Activated CD8-positive, alpha-beta T cell treated with anti-CD3 and anti-CD28 coated beads, Interleukin-2, amount 10 ng/mL, durations not matched to agents 7 days and 5 days (primary cell): ENCODE measurements at regions of chr9 and their contacts with region 1.

Region 1: DNA sequence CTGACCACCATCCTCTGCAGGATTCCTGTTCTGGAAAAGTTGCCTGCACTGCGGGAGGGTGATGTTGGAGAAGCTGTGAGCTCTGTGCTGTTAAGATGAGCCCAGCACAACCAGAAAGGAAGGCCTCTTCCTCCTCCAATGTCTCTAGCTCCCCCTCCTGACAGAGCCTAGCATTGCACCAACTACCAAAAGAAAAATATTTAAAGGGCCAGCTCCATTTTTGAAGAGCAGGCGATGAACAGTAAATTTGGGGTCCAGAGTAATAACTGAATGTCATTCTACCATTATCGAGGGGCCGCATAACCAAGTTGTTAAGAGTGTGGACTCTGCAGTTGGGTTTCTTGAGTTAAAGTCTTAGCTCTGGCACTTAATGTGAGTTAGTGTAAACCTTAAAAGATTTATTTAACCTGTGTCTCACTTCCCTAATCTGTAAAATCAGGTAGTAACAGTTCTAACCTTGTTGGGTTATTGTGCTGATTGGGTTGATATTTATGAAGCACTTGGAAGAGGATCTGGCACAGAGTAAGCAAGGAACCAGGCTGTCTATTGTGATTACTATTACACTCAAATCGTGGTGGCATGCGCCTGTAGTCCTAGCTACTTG is 3.9 kb downstream of the TEX53 start:
- DNase-seq: peak; percentile 92
- ATAC-seq: peak; percentile 84
- H3K4me3 Mint-ChIP-seq: no peak overlapping the region
- H3K27ac Mint-ChIP-seq: peak overlapping the region; percentile 70
- H3K4me1 Mint-ChIP-seq: peaks cover 19% of the 10 kb centered on the region
- H3K27me3 Mint-ChIP-seq: no peaks in the 10 kb centered on the region

Region 2: GRCh38 chr9:114349713-114350480 is 303.8 kb before region 1 on chr9:
- CTCF ChIA-PET with region 1: no interaction called
- POLR2A ChIA-PET with region 1: no interaction called
- DNase-seq: no peak
- ATAC-seq: no peak
- H3K4me3 Mint-ChIP-seq: no peak overlapping the region
- H3K27ac Mint-ChIP-seq: peak overlapping the region; percentile 92
- H3K4me1 Mint-ChIP-seq: peaks cover 65% of the 10 kb centered on the region
- H3K27me3 Mint-ChIP-seq: no peaks in the 10 kb centered on the region

Region 3: DNA sequence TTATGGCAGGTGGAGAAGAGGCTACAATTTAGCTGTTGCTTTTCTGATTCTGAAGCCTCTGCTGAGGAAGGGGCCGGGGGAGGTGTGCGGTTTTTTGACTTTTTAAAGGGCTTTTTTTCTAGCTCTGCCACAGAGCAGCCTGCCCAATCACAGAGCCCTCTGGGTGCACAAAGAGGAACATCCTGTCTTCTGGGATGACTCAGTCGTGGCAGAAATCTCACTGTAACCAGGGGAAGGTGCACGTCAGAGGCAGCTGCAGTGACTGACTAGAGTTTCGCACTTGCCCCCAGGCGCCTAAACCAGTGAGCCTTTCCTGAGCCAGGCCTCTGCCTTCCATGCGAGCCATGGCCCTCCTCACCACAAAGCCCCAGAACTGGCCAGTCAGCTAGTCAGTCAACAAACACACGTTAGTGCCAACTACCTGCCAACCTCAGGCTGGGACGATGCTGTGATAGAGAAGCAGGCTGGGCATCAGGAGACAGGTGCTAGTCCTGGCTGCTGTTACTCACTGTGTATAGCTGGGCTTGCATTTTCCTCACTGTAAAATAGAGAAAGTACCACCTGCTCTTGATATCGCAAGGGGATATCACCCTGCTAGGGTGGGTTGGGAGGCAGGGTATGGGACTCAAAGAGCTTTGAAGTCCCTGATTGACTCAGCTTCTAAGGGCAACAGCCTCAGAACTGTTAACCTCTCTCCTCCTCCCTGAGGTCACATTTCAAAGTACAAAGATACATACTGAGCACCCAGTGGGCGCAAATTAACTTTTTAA is 268.1 kb before region 1 on chr9:
- CTCF ChIA-PET with region 1: interaction called, 18 read pairs
- POLR2A ChIA-PET with region 1: no interaction called
- DNase-seq: peak; percentile 95
- ATAC-seq: peak; percentile 81
- H3K4me3 Mint-ChIP-seq: peak overlapping the region; percentile 99
- H3K27ac Mint-ChIP-seq: peak overlapping the region; percentile 95
- H3K4me1 Mint-ChIP-seq: peaks cover 50% of the 10 kb centered on the region
- H3K27me3 Mint-ChIP-seq: no peaks in the 10 kb centered on the region

Region 4: GRCh38 chr9:114434878-114435311 is 218.8 kb before region 1 on chr9:
- CTCF ChIA-PET with region 1: interaction called, 57 read pairs
- POLR2A ChIA-PET with region 1: no interaction called
- DNase-seq: no peak
- ATAC-seq: peak; percentile 30
- H3K4me3 Mint-ChIP-seq: no peak overlapping the region
- H3K27ac Mint-ChIP-seq: no peak overlapping the region
- H3K4me1 Mint-ChIP-seq: peaks cover 6% of the 10 kb centered on the region
- H3K27me3 Mint-ChIP-seq: peaks cover under 1% of the 10 kb centered on the region

Region 5: DNA sequence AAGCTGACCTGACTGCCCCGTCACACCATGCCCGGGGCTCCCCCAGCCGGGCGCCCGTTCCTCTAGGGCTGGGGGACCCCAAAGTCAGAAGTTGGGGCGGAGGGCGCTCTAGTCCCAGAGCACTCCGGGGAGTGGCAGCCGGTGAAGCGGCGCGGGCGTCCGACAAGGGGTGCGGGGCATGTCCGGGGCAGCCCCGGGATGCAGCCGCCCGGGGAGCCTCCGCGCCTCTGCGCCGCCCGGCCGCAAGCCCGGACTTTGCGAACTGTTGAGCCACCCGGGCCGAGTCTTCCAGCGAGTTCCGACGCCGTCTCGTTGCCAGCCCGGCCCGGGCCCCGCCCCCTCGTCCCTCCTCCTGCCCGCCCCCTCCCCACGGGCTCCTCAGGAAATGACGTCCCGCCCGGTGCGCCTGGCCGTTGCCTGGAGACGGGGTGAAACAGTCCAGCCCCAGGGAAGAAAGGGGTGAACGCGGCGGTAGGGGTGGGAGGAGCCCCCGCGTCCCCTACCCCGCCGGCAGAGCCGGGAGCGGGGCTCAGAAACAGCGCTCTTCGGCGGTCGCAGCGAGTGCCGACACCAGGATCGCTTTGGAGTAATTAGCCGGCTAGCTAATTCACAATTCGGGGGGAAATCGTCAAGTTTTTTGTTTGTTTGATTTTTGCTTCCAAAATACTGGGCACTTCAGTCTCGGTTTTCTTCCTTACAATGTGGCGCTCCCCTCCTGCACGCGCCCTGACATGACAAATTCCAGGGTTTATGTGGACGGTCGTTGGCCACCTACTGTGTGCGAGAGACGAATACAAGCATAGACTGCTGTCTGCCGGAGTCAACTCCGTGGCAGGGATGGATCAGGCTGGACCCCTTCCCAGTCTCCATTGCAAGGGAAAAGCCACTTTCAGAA is 148.2 kb before region 1 on chr9 and contains the start of gene WHRN:
- CTCF ChIA-PET with region 1: interaction called, 60 read pairs
- POLR2A ChIA-PET with region 1: no interaction called
- DNase-seq: peak; percentile 91
- ATAC-seq: peak; percentile 84
- H3K4me3 Mint-ChIP-seq: peak within 1 kb of the TSS; percentile 75
- H3K27ac Mint-ChIP-seq: peak within 1 kb of the TSS; percentile 56
- H3K4me1 Mint-ChIP-seq: peaks cover 25% of the 10 kb centered on the region
- H3K27me3 Mint-ChIP-seq: peaks cover 63% of the 10 kb centered on the region
- total RNA-seq, gene WHRN: 2.6 to 4.1 TPM

Region 6: DNA sequence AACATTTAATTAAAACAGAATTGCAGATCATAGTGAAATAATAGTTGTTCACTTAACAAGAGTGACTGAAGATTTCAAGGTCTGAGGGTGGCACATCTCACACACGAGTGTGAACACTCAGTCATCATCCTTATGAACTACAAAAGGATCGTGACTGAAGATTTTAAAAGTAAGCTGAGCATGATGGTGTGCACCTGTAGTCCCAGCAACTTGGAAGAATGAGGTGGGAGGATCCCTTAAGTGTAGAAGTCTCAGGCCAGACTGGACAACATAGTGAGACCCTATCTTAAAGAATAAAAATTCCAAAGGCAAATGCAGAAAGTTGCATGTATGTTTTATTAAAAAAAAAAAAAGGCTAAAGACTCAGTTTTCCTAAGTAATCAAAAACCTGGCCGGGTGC is 88.5 kb before region 1 on chr9:
- CTCF ChIA-PET with region 1: no interaction called
- POLR2A ChIA-PET with region 1: no interaction called
- DNase-seq: no peak
- ATAC-seq: no peak
- H3K4me3 Mint-ChIP-seq: no peak overlapping the region
- H3K27ac Mint-ChIP-seq: no peak overlapping the region
- H3K4me1 Mint-ChIP-seq: peaks cover 3% of the 10 kb centered on the region
- H3K27me3 Mint-ChIP-seq: peaks cover 12% of the 10 kb centered on the region

Region 7: GRCh38 chr9:114611516-114612271 is 42.0 kb before region 1 on chr9:
- CTCF ChIA-PET with region 1: interaction called, 22 read pairs
- POLR2A ChIA-PET with region 1: interaction called, 7 read pairs
- DNase-seq: peak; percentile 47
- ATAC-seq: peak; percentile 69
- H3K4me3 Mint-ChIP-seq: peak overlapping the region; percentile 83
- H3K27ac Mint-ChIP-seq: peak overlapping the region; percentile 88
- H3K4me1 Mint-ChIP-seq: peaks cover 44% of the 10 kb centered on the region
- H3K27me3 Mint-ChIP-seq: no peaks in the 10 kb centered on the region

Region 8: GRCh38 chr9:114641967-114642366 is 11.7 kb before region 1 on chr9:
- CTCF ChIA-PET with region 1: interaction called, 33 read pairs
- POLR2A ChIA-PET with region 1: no interaction called
- DNase-seq: no peak
- ATAC-seq: no peak
- H3K4me3 Mint-ChIP-seq: no peak overlapping the region
- H3K27ac Mint-ChIP-seq: no peak overlapping the region
- H3K4me1 Mint-ChIP-seq: peaks cover 4% of the 10 kb centered on the region
- H3K27me3 Mint-ChIP-seq: no peaks in the 10 kb centered on the region

Region 9: GRCh38 chr9:114968671-114969070 is 315.0 kb after region 1 on chr9:
- CTCF ChIA-PET with region 1: no interaction called
- POLR2A ChIA-PET with region 1: no interaction called
- DNase-seq: no peak
- ATAC-seq: peak; percentile 51
- H3K4me3 Mint-ChIP-seq: no peak overlapping the region
- H3K27ac Mint-ChIP-seq: no peak overlapping the region
- H3K4me1 Mint-ChIP-seq: peaks cover 27% of the 10 kb centered on the region
- H3K27me3 Mint-ChIP-seq: no peaks in the 10 kb centered on the region

Region 10: DNA sequence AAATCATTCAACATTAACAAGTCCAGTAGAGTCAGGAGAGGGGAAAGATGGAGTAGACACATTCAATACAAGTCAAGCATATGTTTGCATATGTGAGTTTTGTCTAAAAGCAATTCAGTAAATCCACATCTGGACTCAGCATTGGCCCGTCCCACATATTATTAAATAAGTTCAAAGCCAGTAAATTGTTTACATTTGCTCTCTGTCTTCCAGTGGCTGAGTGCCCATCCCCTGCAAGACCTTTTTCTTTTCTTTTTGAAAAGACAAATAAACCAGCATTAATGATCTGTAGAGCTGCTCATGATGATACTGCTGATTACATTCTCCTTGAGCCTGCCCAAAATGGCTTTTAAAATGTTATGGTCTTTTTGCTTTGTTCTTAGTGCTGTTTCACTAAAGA is 393.2 kb after region 1 on chr9:
- CTCF ChIA-PET with region 1: no interaction called
- POLR2A ChIA-PET with region 1: no interaction called
- DNase-seq: no peak
- ATAC-seq: no peak
- H3K4me3 Mint-ChIP-seq: no peak overlapping the region
- H3K27ac Mint-ChIP-seq: no peak overlapping the region
- H3K4me1 Mint-ChIP-seq: peaks cover 6% of the 10 kb centered on the region
- H3K27me3 Mint-ChIP-seq: peaks cover 18% of the 10 kb centered on the region